Sigmoid colon (tissue), 7 donors: ENCODE measurements at regions of chr5 and their contacts with region 1.

Region 1: DNA sequence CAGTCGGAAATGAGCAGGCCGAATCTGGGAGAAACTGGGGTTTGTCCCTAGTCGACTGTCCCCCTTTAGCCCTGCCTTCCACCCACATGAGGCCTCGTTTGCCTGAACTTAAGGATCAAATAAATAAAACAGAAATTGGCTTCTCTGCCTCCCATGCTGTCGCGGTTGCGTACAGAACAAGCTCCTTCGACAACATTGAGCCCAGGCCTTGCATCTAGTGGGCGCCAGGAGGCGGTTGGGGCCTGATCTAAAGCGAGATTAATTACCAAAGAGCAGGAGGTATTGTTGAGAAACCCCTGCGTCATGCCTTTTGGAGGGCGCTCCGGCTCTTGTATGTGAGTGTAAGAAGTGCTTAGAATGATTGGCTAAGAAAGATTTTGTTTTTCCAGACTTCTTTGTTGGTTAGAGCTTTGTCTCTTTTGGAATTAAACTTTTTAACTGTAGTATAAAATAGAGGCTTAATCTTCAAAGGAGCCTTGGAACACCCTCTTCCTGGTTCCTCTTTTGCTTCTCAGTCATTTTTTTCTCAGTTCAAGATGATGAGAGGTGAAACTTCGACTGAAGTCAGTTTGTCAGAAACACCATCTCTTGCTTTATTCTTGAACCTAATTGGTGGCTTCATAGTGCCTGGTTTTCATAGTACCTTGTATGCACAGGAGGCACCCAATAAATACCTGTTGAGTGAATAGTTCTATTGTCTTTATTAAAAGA is 827 bp downstream of the ATP6V0E1 start:
- DNase-seq: peak; percentile 93
- H3K4me3 ChIP-seq: peak overlapping the region; percentile 78 to 97 (median 88)
- H3K27ac ChIP-seq: peak overlapping the region; percentile 93 to 97 (median 96)
- H3K4me1 ChIP-seq: peaks cover 0 to 29% (median 18%) of the 10 kb centered on the region in 4 donors
- H3K27me3 ChIP-seq: no peaks in the 10 kb centered on the region
- CTCF ChIP-seq: peak in 1 of 4 experiments; percentile 43
- EP300 ChIP-seq: no peak
- POLR2A ChIP-seq: no peak

Region 2: DNA sequence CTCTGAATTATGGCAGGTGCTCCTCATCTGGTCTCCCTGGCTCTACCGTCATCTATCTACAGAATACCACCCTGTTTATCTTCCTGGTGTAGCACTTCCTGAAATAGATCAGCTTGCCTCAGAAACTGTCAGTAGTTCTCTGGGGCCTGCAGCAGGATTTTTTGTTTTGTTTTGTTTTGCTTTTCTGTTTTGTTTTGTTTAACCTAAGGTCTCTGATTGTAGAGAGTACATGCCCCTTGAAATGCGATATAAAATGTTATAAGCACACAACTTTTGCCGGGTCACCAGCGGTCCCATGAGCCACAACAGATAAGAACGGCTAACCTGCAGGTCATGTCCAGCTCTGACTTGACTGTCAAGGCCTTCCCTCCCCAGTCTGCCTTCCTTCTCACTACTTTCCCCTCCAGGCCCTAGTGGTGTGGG is 45.1 kb after region 1 on chr5:
- intact Hi-C with region 1: no loop called
- DNase-seq: peak; percentile 17
- H3K4me3 ChIP-seq: no peak overlapping the region
- H3K27ac ChIP-seq: peak overlapping the region in 3 of 4 donors; percentile 4 to 30 (median 21)
- H3K4me1 ChIP-seq: peaks cover 0 to 11% (median 8%) of the 10 kb centered on the region in 4 donors
- H3K27me3 ChIP-seq: no peaks in the 10 kb centered on the region
- CTCF ChIP-seq: no peak
- EP300 ChIP-seq: no peak
- POLR2A ChIP-seq: no peak

Region 3: DNA sequence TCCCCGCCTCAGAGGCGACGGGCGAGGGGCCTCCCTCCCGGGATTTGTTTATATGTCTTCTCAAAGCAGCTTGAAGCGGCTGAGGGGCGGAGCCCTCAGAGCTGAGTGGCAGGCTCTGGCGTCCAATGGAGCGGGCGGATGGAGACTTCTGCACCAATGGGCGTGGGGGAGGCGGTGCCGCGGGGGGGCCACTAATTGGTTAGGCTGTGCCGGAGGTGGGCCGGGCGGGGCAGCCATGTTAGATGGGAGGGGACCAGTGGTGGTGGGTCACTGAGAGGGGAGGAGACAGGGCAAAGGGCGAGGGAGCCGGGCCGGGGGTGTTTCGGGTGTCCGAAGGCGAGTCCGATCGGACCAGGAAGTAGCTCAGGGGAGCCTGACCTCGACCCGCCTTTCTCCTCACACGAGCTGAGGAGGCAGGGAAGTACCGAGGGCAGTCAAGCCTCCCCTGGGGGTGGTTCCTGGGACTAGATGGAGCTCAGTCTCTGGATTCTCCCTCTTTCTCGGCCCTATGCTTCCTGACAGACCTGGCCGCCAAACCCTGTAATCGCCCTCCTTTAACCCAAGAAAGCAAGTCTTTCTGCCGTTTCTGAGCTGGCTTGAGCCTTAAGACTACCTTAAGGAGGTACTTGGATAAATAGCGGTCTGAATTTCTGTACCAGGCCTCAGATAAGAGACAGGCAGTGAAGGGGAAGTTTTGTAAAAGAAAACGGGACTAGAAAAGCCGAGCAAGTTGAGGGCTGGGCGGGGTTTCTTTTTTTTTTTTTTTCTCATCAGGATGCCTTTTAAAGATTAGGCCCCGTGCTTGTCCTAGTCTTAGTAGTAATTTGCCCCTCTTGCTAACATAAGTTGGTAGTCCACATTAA is 72.9 kb after region 1 on chr5:
- intact Hi-C with region 1: loop called (anchors 1 kb)
- DNase-seq: peak; percentile 99
- H3K4me3 ChIP-seq: peak overlapping the region; percentile 77 to 100 (median 100)
- H3K27ac ChIP-seq: peak overlapping the region; percentile 97 to 100 (median 99)
- H3K4me1 ChIP-seq: peaks cover 0 to 59% (median 53%) of the 10 kb centered on the region in 4 donors
- H3K27me3 ChIP-seq: no peaks in the 10 kb centered on the region
- CTCF ChIP-seq: peak in 2 of 4 experiments; percentile 30
- EP300 ChIP-seq: no peak
- POLR2A ChIP-seq: no peak